Lower leg skin (tissue), 4 donors: ENCODE measurements at regions of chr1 and their contacts with region 1.

Region 1: GRCh38 chr1:202926720-202927491 is at the start of gene KLHL12:
- DNase-seq: peak; percentile 96 to 100
- H3K4me3 ChIP-seq: peak within 1 kb of the TSS; percentile 91
- CTCF ChIP-seq: peak in 1 of 3 donors; percentile 69
- POLR2A ChIP-seq: peak in 1 of 2 donors; percentile 52
- total RNA-seq, gene KLHL12: 11.7 to 15.7 (median 15.0) TPM

Region 2: GRCh38 chr1:202861420-202862200 is 65.3 kb before region 1 on chr1:
- intact Hi-C with region 1: no loop called
- DNase-seq: peak; percentile 87 to 98
- H3K4me3 ChIP-seq: peak overlapping the region; percentile 44
- CTCF ChIP-seq: no peak
- POLR2A ChIP-seq: no peak

Region 3: DNA sequence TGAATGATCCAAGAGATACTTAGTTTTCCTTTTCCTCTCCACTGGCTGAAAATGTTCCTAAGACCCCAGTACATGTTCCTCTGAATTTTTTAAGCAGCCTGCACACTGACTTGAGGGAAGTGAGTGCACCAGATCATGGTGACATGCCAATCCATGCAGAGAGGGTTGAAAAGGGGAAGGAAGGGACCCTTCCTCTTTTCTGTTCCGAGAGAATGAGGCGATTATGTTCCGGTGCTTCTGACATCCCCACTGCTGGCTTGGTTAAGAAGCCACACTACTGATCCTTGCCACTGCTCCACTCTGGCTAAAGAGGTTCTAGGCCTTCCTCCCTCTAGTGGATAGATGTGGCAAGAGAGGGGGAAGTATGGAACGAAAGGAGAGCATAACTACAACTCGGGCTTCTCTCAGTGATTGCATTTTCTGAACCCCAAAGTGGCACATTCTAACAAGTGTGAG is 42.0 kb after region 1 on chr1:
- intact Hi-C with region 1: loop called (anchors 5 kb)
- DNase-seq: peak in 1 of 2 donors; percentile 60
- H3K4me3 ChIP-seq: no peak overlapping the region
- CTCF ChIP-seq: no peak
- POLR2A ChIP-seq: no peak

Region 4: DNA sequence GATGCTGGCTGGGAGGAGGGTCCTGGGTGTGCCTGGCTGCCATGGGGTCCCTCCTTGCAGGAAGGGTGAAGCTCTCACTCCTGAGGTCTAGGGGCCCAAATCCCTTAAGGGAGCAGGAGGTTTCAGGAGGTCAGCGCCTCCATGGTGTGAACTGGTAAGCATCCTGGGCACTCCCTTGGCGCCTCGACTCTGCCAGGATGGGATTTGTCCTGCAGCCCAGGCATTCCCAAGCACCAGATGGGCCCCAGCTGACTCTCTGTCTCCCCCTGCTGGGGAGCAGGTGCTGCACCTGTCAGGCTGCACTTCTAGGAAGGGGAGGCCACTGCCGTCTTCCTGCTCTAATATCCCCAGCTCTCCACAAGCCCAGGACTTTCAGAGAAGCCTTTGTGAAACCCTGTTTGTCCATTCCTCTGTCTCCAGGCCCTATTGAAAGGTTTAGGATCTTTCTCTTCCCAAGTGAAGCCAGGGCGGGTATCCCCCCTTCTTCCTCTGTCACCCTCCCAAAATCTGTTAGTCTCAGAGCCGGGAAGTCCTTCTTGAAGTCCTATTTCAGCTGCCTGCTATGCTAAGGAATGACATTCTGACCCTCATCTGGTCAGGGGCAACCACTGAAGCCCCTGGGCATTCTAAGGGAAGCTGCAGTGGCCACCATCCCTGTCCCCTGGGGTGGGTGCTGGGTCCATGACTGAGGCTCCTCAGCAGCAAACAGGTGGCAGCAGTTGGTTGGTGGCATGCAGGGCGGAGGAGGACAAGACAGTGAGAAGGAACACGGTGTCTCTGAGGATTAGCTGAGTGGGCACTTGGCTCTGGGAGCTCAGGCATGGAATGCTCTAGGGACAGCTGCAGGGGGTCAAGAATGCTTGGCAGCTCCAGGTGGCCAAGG is 245.5 kb after region 1 on chr1:
- intact Hi-C with region 1: no loop called
- DNase-seq: no peak
- H3K4me3 ChIP-seq: no peak overlapping the region
- CTCF ChIP-seq: no peak
- POLR2A ChIP-seq: no peak